Activated CD4-positive, alpha-beta T cell treated with anti-CD3 and anti-CD28 coated beads for 36 hours (primary cell): ENCODE measurements at regions of chr2 and their contacts with region 1.

Region 1: DNA sequence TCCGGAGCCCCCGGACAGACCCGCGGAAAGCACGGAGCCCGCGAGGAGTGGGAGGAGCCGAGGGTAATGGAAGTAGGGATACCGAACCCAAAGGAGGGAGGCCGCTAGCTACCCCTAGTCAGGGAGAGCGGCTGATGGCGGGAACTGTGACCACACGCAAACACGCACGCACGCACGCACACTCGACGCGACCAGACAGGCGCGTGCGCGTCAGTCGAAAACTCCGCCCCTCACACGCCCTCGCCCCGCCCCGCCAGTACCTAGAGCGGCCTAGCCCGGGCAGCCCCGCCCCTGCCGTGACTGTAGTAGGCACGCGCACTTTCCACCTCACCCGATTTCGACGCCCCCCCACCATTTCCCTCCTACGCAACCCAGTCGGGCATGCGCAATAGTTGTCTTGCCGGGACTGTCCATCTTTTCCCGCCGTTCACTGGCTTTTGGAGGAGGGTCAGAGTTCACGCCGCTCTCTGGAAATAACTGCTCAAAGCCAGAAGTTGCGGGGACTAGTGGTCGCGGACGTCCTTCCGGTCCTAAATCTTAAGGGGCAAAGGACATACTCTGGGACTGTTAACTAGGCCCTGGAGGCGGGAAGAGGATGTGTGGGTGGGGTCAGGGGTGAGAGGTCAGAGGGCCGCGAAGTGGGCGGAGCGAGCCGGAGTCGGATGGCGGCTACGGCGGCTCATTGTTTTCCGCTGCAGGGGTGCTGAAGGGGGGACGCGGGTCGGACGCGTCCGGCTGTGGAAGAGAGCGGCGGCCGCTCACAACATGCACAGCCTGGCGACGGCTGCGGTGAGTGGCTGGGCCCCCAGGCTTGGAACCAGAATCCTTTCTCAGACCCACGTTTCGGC is at the starts of genes CNOT9 and USP37:
- DNase-seq: peak; percentile 100
- ATAC-seq: peak; percentile 92
- H3K4me3 Mint-ChIP-seq: peak within 1 kb of the TSS; percentile 96
- H3K27ac Mint-ChIP-seq: peak within 1 kb of the TSS; percentile 100
- H3K4me1 Mint-ChIP-seq: peaks cover 58% of the 10 kb centered on the region
- H3K27me3 Mint-ChIP-seq: no peaks in the 10 kb centered on the region
- total RNA-seq, gene CNOT9: 100 to 105 TPM
- total RNA-seq, gene USP37: 42.5 to 46.8 TPM

Region 2: GRCh38 chr2:217666338-217666737 is 902.1 kb before region 1 on chr2:
- CTCF ChIA-PET with region 1: no interaction called
- POLR2A ChIA-PET with region 1: no interaction called
- intact Hi-C with region 1: no loop called
- DNase-seq: peak; percentile 24
- ATAC-seq: peak; percentile 73
- H3K4me3 Mint-ChIP-seq: no peak overlapping the region
- H3K27ac Mint-ChIP-seq: no peak overlapping the region
- H3K4me1 Mint-ChIP-seq: peaks cover 17% of the 10 kb centered on the region
- H3K27me3 Mint-ChIP-seq: peaks cover 2% of the 10 kb centered on the region

Region 3: DNA sequence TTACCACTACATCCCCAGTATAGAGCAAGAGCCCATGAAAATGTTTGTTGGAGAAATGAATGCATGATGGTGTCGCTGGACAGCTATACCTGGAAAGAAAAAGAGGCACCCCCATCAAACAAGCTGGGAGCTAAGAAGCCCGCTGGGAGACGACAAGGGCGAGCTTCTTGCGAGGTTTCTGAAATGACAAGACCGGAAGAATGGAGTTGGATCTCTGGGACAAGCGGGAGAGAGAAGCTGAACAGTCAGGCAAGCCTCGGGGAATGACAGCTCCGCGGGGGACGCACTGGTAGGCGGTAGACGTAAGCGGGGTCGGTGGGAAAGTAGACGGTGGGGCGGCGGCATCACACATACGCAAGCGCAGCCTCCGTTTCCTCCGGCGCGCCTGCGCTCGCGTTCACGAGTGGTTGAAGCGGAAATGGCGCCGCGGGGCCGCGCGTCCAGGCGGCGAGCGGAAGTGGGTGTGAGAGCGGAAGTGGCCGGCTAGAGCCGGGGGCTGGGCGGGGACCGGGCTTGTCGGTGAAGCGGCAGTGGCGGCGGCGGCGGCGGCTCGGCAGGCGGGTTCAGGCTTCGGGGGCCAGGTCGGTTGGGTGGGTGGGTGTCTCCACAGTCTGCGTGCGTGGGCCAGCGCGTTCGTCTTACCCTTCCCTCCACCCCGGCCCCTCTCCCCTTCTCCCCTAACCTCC is 351.6 kb before region 1 on chr2 and contains the start of gene ARPC2:
- CTCF ChIA-PET with region 1: no interaction called
- POLR2A ChIA-PET with region 1: interaction called, 4 read pairs
- intact Hi-C with region 1: loop called in 1 of 2 experiments (anchors 1 kb)
- DNase-seq: peak; percentile 96
- ATAC-seq: peak; percentile 64
- H3K4me3 Mint-ChIP-seq: peak within 1 kb of the TSS; percentile 81
- H3K27ac Mint-ChIP-seq: peak within 1 kb of the TSS; percentile 96
- H3K4me1 Mint-ChIP-seq: peaks cover 34% of the 10 kb centered on the region
- H3K27me3 Mint-ChIP-seq: no peaks in the 10 kb centered on the region
- total RNA-seq, gene ARPC2: 563 to 632 TPM

Region 4: GRCh38 chr2:218395797-218396687 is 172.4 kb before region 1 on chr2:
- CTCF ChIA-PET with region 1: no interaction called
- POLR2A ChIA-PET with region 1: no interaction called
- intact Hi-C with region 1: loop called in 1 of 2 experiments (anchors 1 kb)
- DNase-seq: peak; percentile 97
- ATAC-seq: peak; percentile 68
- H3K4me3 Mint-ChIP-seq: peak overlapping the region; percentile 85
- H3K27ac Mint-ChIP-seq: peak overlapping the region; percentile 92
- H3K4me1 Mint-ChIP-seq: peaks cover 29% of the 10 kb centered on the region
- H3K27me3 Mint-ChIP-seq: peaks cover 6% of the 10 kb centered on the region

Region 5: GRCh38 chr2:218466016-218466521 is 102.3 kb before region 1 on chr2:
- CTCF ChIA-PET with region 1: no interaction called
- POLR2A ChIA-PET with region 1: no interaction called
- intact Hi-C with region 1: no loop called
- DNase-seq: no peak
- ATAC-seq: no peak
- H3K4me3 Mint-ChIP-seq: no peak overlapping the region
- H3K27ac Mint-ChIP-seq: no peak overlapping the region
- H3K4me1 Mint-ChIP-seq: no peaks in the 10 kb centered on the region
- H3K27me3 Mint-ChIP-seq: no peaks in the 10 kb centered on the region

Region 6: DNA sequence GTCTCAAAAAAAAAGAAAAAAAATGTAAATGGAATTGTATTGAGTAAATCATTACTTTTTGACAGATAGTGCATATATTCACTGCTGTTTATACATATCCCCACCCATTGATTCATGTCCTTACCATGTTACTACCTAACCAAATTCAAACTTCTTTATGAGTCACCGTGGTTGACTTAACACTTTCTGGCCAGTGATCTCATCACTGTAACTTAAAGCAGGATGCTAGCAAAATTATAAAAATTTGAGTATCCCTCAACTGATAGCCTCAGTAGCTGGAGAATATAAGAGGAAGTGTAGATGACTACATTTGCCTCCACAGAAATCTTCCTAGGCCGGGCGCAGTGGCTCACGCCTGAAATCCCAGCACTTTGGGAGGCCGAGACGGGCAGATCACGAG is 13.7 kb after region 1 on chr2:
- CTCF ChIA-PET with region 1: no interaction called
- POLR2A ChIA-PET with region 1: no interaction called
- intact Hi-C with region 1: loop called (anchors 1 to 2 kb)
- DNase-seq: peak; percentile 11
- ATAC-seq: peak; percentile 100
- H3K4me3 Mint-ChIP-seq: no peak overlapping the region
- H3K27ac Mint-ChIP-seq: peak overlapping the region; percentile 60
- H3K4me1 Mint-ChIP-seq: peaks cover 46% of the 10 kb centered on the region
- H3K27me3 Mint-ChIP-seq: no peaks in the 10 kb centered on the region

Region 7: DNA sequence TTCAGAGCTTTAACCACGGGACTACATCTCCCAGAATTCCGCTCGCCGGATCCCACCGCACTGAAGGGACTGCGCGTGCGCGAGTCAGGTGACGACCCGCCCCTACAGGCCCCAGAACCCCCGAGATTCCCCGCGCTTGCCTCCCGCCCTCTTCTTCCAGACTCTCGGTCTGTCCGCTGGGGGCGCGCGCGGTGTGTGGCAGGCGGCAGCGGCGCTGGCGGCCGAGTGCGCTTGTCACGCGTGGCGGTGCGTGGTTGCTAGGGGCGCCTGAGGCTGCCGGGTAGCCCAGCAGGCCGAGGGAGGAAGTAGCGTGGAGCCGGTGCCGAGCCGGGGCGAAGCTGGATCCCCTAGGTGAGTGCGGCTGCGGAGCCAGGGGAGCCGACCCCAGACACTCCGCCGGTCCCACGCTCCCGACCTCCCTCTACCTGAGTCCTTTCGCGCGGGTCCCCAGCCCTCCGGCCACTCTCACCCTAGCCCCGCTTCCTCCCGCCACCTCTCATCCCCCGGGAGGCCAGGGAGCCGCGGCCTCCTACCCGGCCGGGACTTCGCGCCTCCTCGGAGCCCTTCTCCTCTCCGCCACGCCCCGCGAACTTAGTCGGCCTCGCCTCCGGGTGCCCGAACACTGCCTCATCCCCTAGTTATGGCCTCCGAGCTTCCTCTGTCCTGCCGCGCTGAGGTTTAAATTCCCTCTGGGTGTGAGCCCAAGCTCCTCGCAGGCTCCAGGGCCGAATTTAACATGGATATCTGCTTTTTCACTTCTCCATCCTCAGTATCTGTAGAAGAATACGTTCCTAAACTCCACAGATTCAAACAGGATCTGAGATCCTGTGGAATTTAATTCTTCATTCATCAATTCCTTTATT is 142.5 kb after region 1 on chr2 and contains the start of gene TTLL4:
- CTCF ChIA-PET with region 1: interaction called, 3 read pairs
- POLR2A ChIA-PET with region 1: no interaction called
- intact Hi-C with region 1: loop called in 1 of 2 experiments (anchors 1 kb)
- DNase-seq: peak; percentile 99
- ATAC-seq: peak; percentile 98
- H3K4me3 Mint-ChIP-seq: peak within 1 kb of the TSS; percentile 96
- H3K27ac Mint-ChIP-seq: peak within 1 kb of the TSS; percentile 80
- H3K4me1 Mint-ChIP-seq: peaks cover 20% of the 10 kb centered on the region
- H3K27me3 Mint-ChIP-seq: no peaks in the 10 kb centered on the region
- total RNA-seq, gene TTLL4: 33.7 to 46.6 TPM

Region 8: DNA sequence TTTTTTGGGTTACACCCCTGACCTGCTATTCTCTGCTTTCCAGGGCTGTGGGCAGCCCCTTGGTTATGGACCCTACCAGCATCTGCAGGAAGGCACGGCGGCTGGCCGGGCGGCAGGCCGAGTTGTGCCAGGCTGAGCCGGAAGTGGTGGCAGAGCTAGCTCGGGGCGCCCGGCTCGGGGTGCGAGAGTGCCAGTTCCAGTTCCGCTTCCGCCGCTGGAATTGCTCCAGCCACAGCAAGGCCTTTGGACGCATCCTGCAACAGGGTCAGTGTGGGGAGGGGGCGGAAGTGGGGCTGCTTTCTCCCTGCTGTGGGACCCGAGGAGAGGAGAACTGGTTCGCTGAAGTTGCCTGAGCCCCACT is 302.6 kb after region 1 on chr2:
- CTCF ChIA-PET with region 1: no interaction called
- POLR2A ChIA-PET with region 1: no interaction called
- intact Hi-C with region 1: no loop called
- DNase-seq: no peak
- ATAC-seq: no peak
- H3K4me3 Mint-ChIP-seq: peak overlapping the region; percentile 44
- H3K27ac Mint-ChIP-seq: no peak overlapping the region
- H3K4me1 Mint-ChIP-seq: peaks cover 17% of the 10 kb centered on the region
- H3K27me3 Mint-ChIP-seq: peaks cover 53% of the 10 kb centered on the region

Region 9: DNA sequence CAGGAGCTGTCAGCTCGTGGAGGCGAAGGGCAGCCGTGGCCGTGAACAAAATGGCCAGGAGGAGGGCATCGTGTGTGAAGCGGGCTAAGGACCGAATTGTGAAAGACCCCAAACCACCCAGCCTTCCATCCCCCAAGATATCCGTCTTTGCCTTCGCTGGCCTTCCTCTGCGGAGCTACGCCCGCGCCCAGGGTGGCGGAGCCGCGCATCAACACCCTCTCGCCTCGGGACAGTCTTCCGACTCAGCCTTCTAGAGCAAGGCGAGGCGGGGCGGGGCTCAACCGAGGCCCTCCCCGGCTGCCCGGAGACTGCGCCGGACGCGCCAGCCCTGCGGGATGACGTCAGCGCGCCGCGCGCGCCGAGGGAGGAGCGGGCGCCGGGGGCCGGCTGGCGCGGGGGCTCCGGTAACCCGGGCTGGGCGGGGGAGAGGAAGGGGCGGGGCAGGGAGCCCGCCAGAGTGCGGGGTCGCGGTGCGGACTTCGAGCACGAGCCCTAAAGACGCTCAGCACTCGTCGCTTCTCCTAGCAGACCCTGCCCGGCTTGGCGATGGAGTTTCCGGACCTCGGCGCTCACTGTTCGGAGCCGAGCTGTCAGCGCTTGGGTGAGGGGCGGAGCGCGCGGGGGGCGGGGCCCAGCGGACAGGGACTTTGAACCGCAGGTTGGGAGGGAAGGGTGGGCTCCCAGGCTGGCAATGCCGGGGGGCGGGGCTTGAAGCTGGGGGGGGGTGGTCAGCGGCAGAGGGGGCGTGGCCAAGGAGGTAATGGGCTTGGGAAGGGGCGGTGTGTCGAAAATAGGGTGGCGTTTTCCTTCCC is 638.2 kb after region 1 on chr2 and contains the start of gene ZFAND2B:
- CTCF ChIA-PET with region 1: no interaction called
- POLR2A ChIA-PET with region 1: no interaction called
- intact Hi-C with region 1: loop called in 1 of 2 experiments (anchors 2 kb)
- DNase-seq: peak; percentile 98
- ATAC-seq: peak; percentile 96
- H3K4me3 Mint-ChIP-seq: peak within 1 kb of the TSS; percentile 86
- H3K27ac Mint-ChIP-seq: peak within 1 kb of the TSS; percentile 94
- H3K4me1 Mint-ChIP-seq: peaks cover 34% of the 10 kb centered on the region
- H3K27me3 Mint-ChIP-seq: no peaks in the 10 kb centered on the region
- total RNA-seq, gene ZFAND2B: 21.5 to 27.6 TPM

Region 10: DNA sequence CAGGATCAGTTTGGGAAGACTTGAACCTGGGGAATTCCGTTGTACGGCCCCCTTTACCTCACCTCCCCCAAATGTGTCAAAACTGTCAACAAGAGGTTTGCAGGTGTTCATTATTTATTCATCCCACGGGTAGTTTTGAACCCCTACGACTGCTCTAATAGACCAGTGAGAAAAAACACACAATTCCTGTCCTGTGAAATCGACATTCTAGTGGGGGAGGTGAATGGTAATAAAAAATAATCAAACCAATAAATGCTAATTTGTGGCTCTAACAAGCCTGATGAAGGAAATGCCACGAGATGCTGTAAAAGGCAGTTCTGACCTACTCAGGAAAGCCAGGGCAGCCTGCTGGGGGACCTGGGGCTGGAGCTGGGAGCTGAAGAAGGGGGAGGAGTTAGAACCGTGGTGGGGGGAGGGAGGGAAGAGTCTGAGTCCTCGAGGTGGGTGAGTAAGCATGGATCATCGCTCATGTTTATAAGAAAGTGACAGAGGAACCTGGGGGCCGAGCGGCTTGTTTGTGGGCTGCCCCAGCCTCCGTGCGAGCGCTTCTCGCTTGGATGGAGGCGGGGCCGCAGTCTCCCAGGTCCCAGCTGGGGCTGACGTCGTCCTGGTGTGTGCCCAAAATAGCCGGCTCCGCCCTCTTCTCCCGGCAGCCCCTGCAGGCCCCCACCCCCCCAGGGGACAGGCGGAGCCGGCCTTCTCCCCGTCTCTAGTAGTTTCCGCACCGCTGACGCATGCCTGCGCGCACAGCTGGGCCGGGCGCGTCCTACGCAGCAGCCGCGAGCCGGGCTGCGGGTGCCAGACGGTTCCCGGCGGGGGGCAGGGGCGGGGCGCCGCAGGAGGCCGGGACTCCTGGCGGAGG is 710.5 kb after region 1 on chr2 and contains the start of gene DNAJB2:
- CTCF ChIA-PET with region 1: no interaction called
- POLR2A ChIA-PET with region 1: no interaction called
- intact Hi-C with region 1: loop called in 1 of 2 experiments (anchors 1 kb)
- DNase-seq: peak; percentile 100
- ATAC-seq: peak; percentile 86
- H3K4me3 Mint-ChIP-seq: peak within 1 kb of the TSS; percentile 96
- H3K27ac Mint-ChIP-seq: peak within 1 kb of the TSS; percentile 95
- H3K4me1 Mint-ChIP-seq: peaks cover 37% of the 10 kb centered on the region
- H3K27me3 Mint-ChIP-seq: no peaks in the 10 kb centered on the region
- total RNA-seq, gene DNAJB2: 51.8 to 62.8 TPM